ENCODE measurements at regions of chr1 and their contacts with region 1.

Region 1: GRCh38 chr1:86833461-86834215 is 80.3 kb downstream of the SELENOF start:
- DNase-seq: peak; percentile 71
- H3K4me3 ChIP-seq: no peak overlapping the region
- H3K27ac ChIP-seq: no peak overlapping the region
- H3K4me1 ChIP-seq: no peaks in the 10 kb centered on the region
- H3K27me3 ChIP-seq: no peaks in the 10 kb centered on the region
- CTCF ChIP-seq: peak; percentile 39 to 64

Region 2: GRCh38 chr1:86741947-86742572 is 91.6 kb before region 1 on chr1:
- CTCF ChIA-PET with region 1: no interaction called
- dilution Hi-C with region 1: no loop called
- in situ Hi-C with region 1: no loop called
- intact Hi-C with region 1: no loop called
- DNase-seq: peak; percentile 12
- H3K4me3 ChIP-seq: no peak overlapping the region
- H3K27ac ChIP-seq: no peak overlapping the region
- H3K4me1 ChIP-seq: no peaks in the 10 kb centered on the region
- H3K27me3 ChIP-seq: no peaks in the 10 kb centered on the region
- CTCF ChIP-seq: peak; percentile 56 to 65

Region 3: DNA sequence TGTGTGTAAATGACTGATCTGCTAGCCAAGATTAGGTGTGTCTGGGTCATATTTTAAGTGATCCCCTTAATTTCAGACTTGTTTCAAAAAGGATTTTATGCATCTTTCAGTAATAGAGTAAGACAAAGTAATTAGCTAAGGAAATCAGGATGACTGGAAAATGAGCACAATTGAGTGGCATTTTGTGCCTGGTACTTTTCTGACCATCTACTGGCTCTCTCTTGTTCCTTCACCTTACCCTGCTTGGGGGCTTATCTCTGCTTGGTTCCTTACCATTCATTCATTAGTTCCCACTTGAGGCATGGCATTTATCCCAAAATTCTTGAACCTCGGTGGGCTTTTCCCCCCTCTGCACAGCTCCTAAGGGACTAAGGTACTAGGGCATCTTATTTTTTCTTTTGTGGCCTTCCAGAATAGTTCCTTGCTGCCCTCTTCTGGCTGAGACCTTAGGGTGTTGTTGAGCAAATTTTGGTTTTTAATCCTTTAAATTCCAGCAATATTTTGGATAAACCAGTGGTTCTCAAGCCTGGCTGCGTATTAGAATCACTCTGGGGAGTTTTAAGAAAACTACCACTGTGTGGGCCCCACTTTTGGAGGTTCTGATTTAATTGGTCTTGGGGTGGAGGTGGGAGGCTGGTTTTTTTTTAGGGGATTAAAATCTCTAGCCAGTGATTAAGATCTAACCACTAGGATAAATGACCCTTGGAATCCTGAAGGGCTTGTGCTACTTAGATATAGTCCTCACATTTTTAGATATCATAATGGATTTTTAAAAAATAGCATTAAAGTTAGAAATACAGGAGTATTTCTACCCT is 131.6 kb after region 1 on chr1:
- CTCF ChIA-PET with region 1: interaction called, 8 read pairs
- dilution Hi-C with region 1: no loop called
- in situ Hi-C with region 1: loop called (anchors 10 to 25 kb)
- intact Hi-C with region 1: loop called (anchors 1 kb)
- DNase-seq: peak; percentile 11
- H3K4me3 ChIP-seq: no peak overlapping the region
- H3K27ac ChIP-seq: no peak overlapping the region
- H3K4me1 ChIP-seq: no peaks in the 10 kb centered on the region
- H3K27me3 ChIP-seq: no peaks in the 10 kb centered on the region
- CTCF ChIP-seq: peak; percentile 65 to 70

Region 4: GRCh38 chr1:87024936-87025540 is 191.4 kb after region 1 on chr1:
- CTCF ChIA-PET with region 1: no interaction called
- dilution Hi-C with region 1: no loop called
- in situ Hi-C with region 1: no loop called
- intact Hi-C with region 1: loop called (anchors 1 kb)
- DNase-seq: peak; percentile 30
- H3K4me3 ChIP-seq: no peak overlapping the region
- H3K27ac ChIP-seq: no peak overlapping the region
- H3K4me1 ChIP-seq: no peaks in the 10 kb centered on the region
- H3K27me3 ChIP-seq: no peaks in the 10 kb centered on the region
- CTCF ChIP-seq: peak; percentile 58 to 69

Region 5: GRCh38 chr1:87084244-87084836 is 250.7 kb after region 1 on chr1:
- CTCF ChIA-PET with region 1: no interaction called
- dilution Hi-C with region 1: no loop called
- in situ Hi-C with region 1: loop called (anchors 5 to 25 kb)
- intact Hi-C with region 1: loop called (anchors 1 kb)
- DNase-seq: no peak
- H3K4me3 ChIP-seq: no peak overlapping the region
- H3K27ac ChIP-seq: no peak overlapping the region
- H3K4me1 ChIP-seq: peaks cover 8% of the 10 kb centered on the region
- H3K27me3 ChIP-seq: no peaks in the 10 kb centered on the region
- CTCF ChIP-seq: peak; percentile 47 to 48

Measured in mammary epithelial cell (primary cell).